H1 (cell line): ENCODE measurements at regions of chr12 and their contacts with region 1.

Region 1: GRCh38 chr12:14769969-14770495 is 33.2 kb downstream of the WBP11 start:
- DNase-seq: peak in 1 of 2 experiments; percentile 61
- H3K4me3 ChIP-seq: peak overlapping the region; percentile 84 to 99 (median 92)
- H3K27ac ChIP-seq: peak overlapping the region; percentile 93
- H3K4me1 ChIP-seq: no peaks in the 10 kb centered on the region; a peak in 2 of 7 replicates
- H3K27me3 ChIP-seq: no peaks in the 10 kb centered on the region
- CTCF ChIP-seq: peak; percentile 78 to 97 (median 83)
- EP300 ChIP-seq: no peak
- POLR2A ChIP-seq: peak; percentile 84 to 90
- RAD21 ChIP-seq: peak; percentile 33 to 37; a peak in 2 of 4 replicates

Region 2: DNA sequence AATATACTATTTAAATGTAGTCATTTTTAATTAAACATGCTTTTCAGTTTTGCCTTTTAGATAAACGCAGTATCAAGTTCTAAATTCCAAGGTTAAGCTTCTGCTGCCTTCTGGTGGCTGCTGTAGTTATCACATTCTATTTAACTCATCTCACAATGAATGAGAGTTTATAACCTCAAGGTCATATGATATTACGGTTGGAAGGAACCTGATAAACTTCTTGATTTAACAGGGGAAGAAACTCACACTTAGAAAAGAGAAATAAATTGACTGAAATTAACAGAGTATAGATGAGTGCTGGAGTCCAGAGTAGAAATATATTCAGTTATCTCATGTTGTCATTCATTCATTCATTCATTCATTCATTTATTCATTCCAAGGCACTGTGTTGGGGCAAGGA is 105.5 kb before region 1 on chr12:
- CTCF ChIA-PET with region 1: interaction called, 5 read pairs
- POLR2A ChIA-PET with region 1: interaction called, 26 read pairs
- DNase-seq: no peak
- H3K4me3 ChIP-seq: no peak overlapping the region
- H3K27ac ChIP-seq: no peak overlapping the region
- H3K4me1 ChIP-seq: peaks cover 0 to 3% (median 1%) of the 10 kb centered on the region in 4 experiments; a peak in 3 of 7 replicates
- H3K27me3 ChIP-seq: no peaks in the 10 kb centered on the region
- CTCF ChIP-seq: peak in 2 of 3 experiments; percentile 49 to 52; a peak in 2 of 4 replicates
- EP300 ChIP-seq: no peak
- POLR2A ChIP-seq: no peak
- RAD21 ChIP-seq: peak; percentile 75 to 82

Region 3: GRCh38 chr12:14701809-14702568 is 68.0 kb before region 1 on chr12:
- CTCF ChIA-PET with region 1: interaction called, 8 read pairs
- POLR2A ChIA-PET with region 1: interaction called, 79 read pairs
- DNase-seq: no peak
- H3K4me3 ChIP-seq: no peak overlapping the region
- H3K27ac ChIP-seq: no peak overlapping the region
- H3K4me1 ChIP-seq: peaks cover 0 to 4% (median 3%) of the 10 kb centered on the region in 4 experiments; a peak in 3 of 7 replicates
- H3K27me3 ChIP-seq: no peaks in the 10 kb centered on the region
- CTCF ChIP-seq: no peak
- EP300 ChIP-seq: no peak
- POLR2A ChIP-seq: 0 out of 3 replicates have a peak, but pooled peaks of 1 of the 2 experiments have one; percentile 48
- RAD21 ChIP-seq: no peak

Region 4: DNA sequence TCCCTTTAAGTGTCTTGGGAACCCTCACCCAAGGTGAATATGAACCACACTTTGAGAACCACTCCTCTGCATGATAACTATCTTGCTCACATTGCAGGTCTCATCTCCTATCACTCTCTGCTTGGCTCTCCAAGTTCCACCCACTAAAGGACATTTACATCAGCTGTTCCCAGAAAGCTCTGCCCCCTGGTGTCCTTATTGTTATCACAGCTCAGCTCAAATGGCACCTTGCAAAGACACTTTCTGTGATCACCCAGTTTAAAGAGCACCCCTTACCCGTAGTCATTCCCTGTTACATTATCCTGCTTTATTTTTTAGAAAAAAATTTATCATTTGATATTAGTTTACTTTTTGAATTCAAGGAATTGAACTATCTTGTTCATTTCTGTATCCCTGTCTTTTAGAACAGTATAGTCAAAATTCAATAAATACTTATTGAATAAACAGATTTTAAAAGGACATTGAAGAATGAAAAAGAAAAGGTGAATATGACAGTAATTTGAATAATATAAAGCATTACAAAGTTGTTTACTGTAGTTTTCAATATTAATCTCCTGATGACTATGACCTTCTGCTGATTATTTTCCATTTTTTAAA is 53.1 kb before region 1 on chr12:
- CTCF ChIA-PET with region 1: interaction called, 7 read pairs
- POLR2A ChIA-PET with region 1: interaction called, 58 read pairs
- DNase-seq: no peak
- H3K4me3 ChIP-seq: no peak overlapping the region
- H3K27ac ChIP-seq: no peak overlapping the region
- H3K4me1 ChIP-seq: peaks cover 2 to 26% (median 11%) of the 10 kb centered on the region in 4 experiments
- H3K27me3 ChIP-seq: no peaks in the 10 kb centered on the region
- CTCF ChIP-seq: peak in 2 of 3 experiments; percentile 61 to 77; a peak in 3 of 4 replicates
- EP300 ChIP-seq: no peak
- POLR2A ChIP-seq: no peak
- RAD21 ChIP-seq: peak; percentile 39 to 58

Region 5: GRCh38 chr12:14741153-14741552 is 28.9 kb before region 1 on chr12:
- CTCF ChIA-PET with region 1: interaction called, 6 read pairs
- POLR2A ChIA-PET with region 1: interaction called, 21 read pairs
- DNase-seq: no peak
- H3K4me3 ChIP-seq: no peak overlapping the region
- H3K27ac ChIP-seq: no peak overlapping the region
- H3K4me1 ChIP-seq: no peaks in the 10 kb centered on the region
- H3K27me3 ChIP-seq: no peaks in the 10 kb centered on the region
- CTCF ChIP-seq: no peak
- EP300 ChIP-seq: no peak
- POLR2A ChIP-seq: no peak
- RAD21 ChIP-seq: no peak

Region 6: DNA sequence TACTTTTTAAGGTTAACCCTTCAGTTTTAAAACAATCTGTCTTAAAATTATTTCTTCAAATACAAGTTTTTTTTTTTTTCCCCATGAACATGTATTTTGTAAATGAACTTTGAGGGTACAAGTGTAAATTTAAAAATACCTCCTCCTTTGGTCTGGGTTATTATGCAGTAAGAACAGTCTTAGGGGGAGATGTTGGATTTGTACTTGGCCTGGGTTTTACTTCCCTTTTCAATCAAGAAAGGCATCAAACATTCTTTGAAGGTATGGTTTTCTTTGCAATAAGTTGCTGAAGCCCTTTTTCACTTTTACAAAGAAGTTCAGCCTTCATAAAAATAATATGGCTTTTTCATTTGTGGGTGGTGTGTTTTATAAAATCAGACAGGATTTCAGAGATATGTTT is 12.7 kb after region 1 on chr12:
- CTCF ChIA-PET with region 1: interaction called, 24 read pairs
- POLR2A ChIA-PET with region 1: interaction called, 136 read pairs
- DNase-seq: no peak
- H3K4me3 ChIP-seq: no peak overlapping the region
- H3K27ac ChIP-seq: no peak overlapping the region
- H3K4me1 ChIP-seq: no peaks in the 10 kb centered on the region
- H3K27me3 ChIP-seq: no peaks in the 10 kb centered on the region
- CTCF ChIP-seq: no peak
- EP300 ChIP-seq: no peak
- POLR2A ChIP-seq: no peak
- RAD21 ChIP-seq: no peak

Region 7: GRCh38 chr12:14803011-14803829 is 33.2 kb after region 1 on chr12 and contains the starts of genes C12orf60 and WBP11:
- CTCF ChIA-PET with region 1: interaction called, 9 read pairs
- POLR2A ChIA-PET with region 1: interaction called, 68 read pairs
- DNase-seq: peak; percentile 82 to 89
- H3K4me3 ChIP-seq: peak within 1 kb of the TSS; percentile 66 to 98 (median 96)
- H3K27ac ChIP-seq: peak within 1 kb of the TSS; percentile 93
- H3K4me1 ChIP-seq: peaks cover 0 to 2% (median 0%) of the 10 kb centered on the region in 4 experiments; a peak in 3 of 7 replicates
- H3K27me3 ChIP-seq: no peaks in the 10 kb centered on the region
- CTCF ChIP-seq: no peak
- EP300 ChIP-seq: no peak
- POLR2A ChIP-seq: peak; percentile 90 to 95
- RAD21 ChIP-seq: no peak
- total RNA-seq, gene C12orf60: 1.2 and 1.5 TPM in 2 replicates
- total RNA-seq, gene WBP11: 122 and 134 TPM in 2 replicates